Tibial artery (tissue), 4 donors: ENCODE measurements at regions of chr2 and their contacts with region 1.

Region 1: GRCh38 chr2:26970244-26970920 is at the start of gene MAPRE3:
- DNase-seq: peak; percentile 74 to 86
- H3K4me3 ChIP-seq: peak within 1 kb of the TSS; percentile 73 to 74
- H3K27ac ChIP-seq: peak within 1 kb of the TSS; percentile 74 to 77
- H3K4me1 ChIP-seq: peaks cover 0 to 23% (median 9%) of the 10 kb centered on the region in 4 donors
- H3K27me3 ChIP-seq: peaks cover 0 to 2% of the 10 kb centered on the region in 2 donors
- CTCF ChIP-seq: no peak

Region 2: GRCh38 chr2:27016801-27017325 is 46.5 kb after region 1 on chr2:
- intact Hi-C with region 1: no loop called
- DNase-seq: peak in 1 of 2 donors; percentile 64
- H3K4me3 ChIP-seq: no peak overlapping the region
- H3K27ac ChIP-seq: no peak overlapping the region
- H3K4me1 ChIP-seq: peaks cover 0 to 29% (median 14%) of the 10 kb centered on the region in 4 donors
- H3K27me3 ChIP-seq: no peaks in the 10 kb centered on the region
- CTCF ChIP-seq: peak; percentile 61 to 68

Region 3: DNA sequence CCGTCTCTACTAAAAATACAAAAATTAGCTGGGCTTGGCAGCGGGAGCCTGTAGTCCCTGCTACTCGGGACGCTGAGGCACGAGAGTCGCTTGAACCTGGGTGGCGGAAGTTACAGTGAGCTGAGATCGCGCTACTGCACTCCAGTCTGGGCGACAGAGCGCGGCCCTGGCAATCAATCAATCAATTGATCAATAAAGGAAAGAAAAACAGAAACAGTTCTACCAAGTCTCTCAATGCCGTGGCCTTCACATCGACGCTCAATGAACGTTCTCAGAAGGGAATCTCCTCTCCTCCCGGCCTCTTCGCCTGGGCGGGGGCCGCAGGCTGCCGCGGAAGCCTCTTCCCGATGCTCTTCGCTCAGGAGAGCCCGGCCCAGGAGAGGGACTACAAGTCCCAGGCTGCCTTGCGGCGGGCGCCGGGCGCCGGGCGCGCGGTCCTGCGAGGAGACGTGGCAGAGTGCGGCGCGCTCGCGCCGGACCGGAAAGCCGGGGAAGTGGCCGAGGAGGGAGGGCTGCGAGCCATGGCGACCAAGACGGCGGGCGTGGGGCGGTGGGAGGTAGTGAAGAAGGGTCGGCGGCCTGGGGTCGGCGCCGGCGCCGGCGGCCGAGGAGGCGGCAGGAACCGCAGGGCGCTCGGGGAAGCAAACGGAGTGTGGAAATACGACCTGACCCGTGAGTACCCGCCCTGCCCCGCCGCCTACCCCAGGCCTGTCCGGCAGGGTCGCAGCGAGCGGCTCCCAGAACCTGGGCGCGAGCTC is 62.3 kb after region 1 on chr2 and contains the start of gene TMEM214:
- intact Hi-C with region 1: loop called (anchors 5 kb)
- DNase-seq: peak; percentile 91 to 93
- H3K4me3 ChIP-seq: peak within 1 kb of the TSS; percentile 96 to 98
- H3K27ac ChIP-seq: peak within 1 kb of the TSS; percentile 91
- H3K4me1 ChIP-seq: peaks cover 0 to 22% (median 16%) of the 10 kb centered on the region in 4 donors
- H3K27me3 ChIP-seq: no peaks in the 10 kb centered on the region
- CTCF ChIP-seq: peak; percentile 6 to 24

Region 4: DNA sequence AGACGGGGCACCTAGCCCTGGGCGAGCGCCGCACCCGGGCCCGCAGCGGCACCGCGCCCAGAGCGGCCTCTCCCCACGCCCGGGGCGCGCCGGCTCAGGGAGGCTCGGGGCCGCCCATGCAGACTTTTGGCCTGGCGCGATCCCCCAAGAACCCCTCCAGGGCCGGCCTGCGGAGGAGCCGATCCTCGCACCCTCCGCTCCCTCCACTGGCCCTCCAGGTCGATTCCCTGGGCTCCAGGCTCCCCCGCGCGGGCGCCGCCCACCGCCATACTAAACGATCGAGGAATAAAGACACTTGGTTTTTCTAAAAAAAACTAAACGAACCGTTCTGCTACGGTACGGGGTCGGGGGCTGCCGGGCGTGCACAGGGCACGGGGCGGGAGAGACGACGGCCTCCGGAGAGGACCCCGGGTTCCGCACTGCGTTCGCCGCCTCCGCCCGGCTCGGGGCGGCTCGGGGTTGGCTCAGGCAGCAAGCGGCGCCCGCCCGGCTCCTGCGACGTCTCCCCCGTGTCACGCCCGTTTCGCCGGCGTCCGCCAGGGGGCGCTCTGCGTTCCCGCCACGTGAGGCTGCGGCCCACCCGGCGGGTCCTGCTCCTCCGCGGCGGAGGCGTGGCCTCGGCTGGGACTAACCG is 115.8 kb after region 1 on chr2:
- intact Hi-C with region 1: loop called (anchors 2 kb)
- DNase-seq: peak; percentile 93 to 97
- H3K4me3 ChIP-seq: peak overlapping the region; percentile 63 to 85
- H3K27ac ChIP-seq: peak overlapping the region; percentile 91 to 96
- H3K4me1 ChIP-seq: peaks cover 0 to 43% (median 35%) of the 10 kb centered on the region in 4 donors
- H3K27me3 ChIP-seq: no peaks in the 10 kb centered on the region
- CTCF ChIP-seq: peak; percentile 82 to 95

Region 5: GRCh38 chr2:27217217-27218121 is 247.1 kb after region 1 on chr2 and contains the start of gene CAD:
- intact Hi-C with region 1: loop called (anchors 10 kb)
- DNase-seq: peak; percentile 86 to 93
- H3K4me3 ChIP-seq: peak within 1 kb of the TSS; percentile 64 to 65
- H3K27ac ChIP-seq: peak within 1 kb of the TSS; percentile 56 to 76
- H3K4me1 ChIP-seq: peaks cover 0 to 22% (median 15%) of the 10 kb centered on the region in 4 donors
- H3K27me3 ChIP-seq: no peaks in the 10 kb centered on the region
- CTCF ChIP-seq: peak; percentile 36 to 47

Region 6: GRCh38 chr2:27647289-27647688 is 676.9 kb after region 1 on chr2:
- intact Hi-C with region 1: no loop called
- DNase-seq: no peak
- H3K4me3 ChIP-seq: no peak overlapping the region
- H3K27ac ChIP-seq: no peak overlapping the region
- H3K4me1 ChIP-seq: no peaks in the 10 kb centered on the region
- H3K27me3 ChIP-seq: no peaks in the 10 kb centered on the region
- CTCF ChIP-seq: no peak